HepG2 (cell line): ENCODE measurements at regions of chr6 and their contacts with region 1.

Region 1: GRCh38 chr6:50128420-50129005 is 78.8 kb upstream of the DEFB112 start:
- DNase-seq: peak; percentile 5
- ATAC-seq: no peak
- H3K4me3 ChIP-seq: no peak overlapping the region
- H3K27ac ChIP-seq: no peak overlapping the region
- H3K4me1 ChIP-seq: peaks cover 5% of the 10 kb centered on the region; the same call in 1 of the 2 replicates
- H3K27me3 ChIP-seq: no peaks in the 10 kb centered on the region
- CTCF ChIP-seq: peak; percentile 37
- EP300 ChIP-seq: no peak
- POLR2A ChIP-seq: no peak
- RAD21 ChIP-seq: no peak

Region 2: GRCh38 chr6:49866485-49866943 is 262.0 kb before region 1 on chr6 and contains the start of gene CRISP1:
- CTCF ChIA-PET with region 1: no interaction called
- POLR2A ChIA-PET with region 1: no interaction called
- in situ Hi-C with region 1: no loop called
- intact Hi-C with region 1: no loop called
- DNase-seq: no peak
- ATAC-seq: no peak
- H3K4me3 ChIP-seq: no peak within 1 kb of the TSS
- H3K27ac ChIP-seq: no peak within 1 kb of the TSS
- H3K4me1 ChIP-seq: no peaks in the 10 kb centered on the region
- H3K27me3 ChIP-seq: no peaks in the 10 kb centered on the region
- CTCF ChIP-seq: no peak
- EP300 ChIP-seq: no peak
- POLR2A ChIP-seq: no peak
- RAD21 ChIP-seq: no peak
- total RNA-seq, gene CRISP1: not detected in 2 replicates

Region 3: DNA sequence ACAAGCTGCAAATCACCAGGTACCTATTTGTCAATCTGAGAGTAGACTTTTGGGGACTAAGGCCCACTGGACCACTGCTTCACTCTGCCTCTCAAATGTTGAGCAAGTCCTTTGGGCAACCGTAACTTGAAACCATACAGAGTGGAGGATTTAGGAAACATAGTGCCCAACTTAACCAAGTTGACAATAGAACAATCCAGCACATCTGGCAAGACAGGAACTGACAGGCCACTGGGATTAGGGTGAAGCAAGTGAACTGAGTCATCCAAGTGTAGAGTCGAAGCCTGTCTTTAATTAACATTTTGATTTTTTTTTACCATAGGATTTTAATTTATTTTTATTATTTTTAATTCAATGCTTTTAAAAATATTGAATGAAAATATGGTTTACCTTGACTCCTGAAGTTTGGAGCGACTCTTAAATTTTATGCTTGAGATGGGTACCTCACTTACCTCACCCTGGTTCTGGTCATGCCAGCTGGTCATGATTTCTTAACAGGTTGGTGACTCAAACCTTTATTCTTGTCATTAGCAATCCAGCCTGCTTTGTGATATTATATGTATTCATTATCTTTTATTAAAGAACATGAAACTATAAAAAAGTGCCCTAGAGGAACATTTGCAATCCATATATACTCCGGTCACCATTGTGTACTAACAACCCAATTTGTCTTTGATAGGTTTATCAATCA is 233.3 kb after region 1 on chr6:
- CTCF ChIA-PET with region 1: no interaction called
- POLR2A ChIA-PET with region 1: no interaction called
- in situ Hi-C with region 1: no loop called
- intact Hi-C with region 1: no loop called
- DNase-seq: no peak
- ATAC-seq: no peak
- H3K4me3 ChIP-seq: no peak overlapping the region
- H3K27ac ChIP-seq: no peak overlapping the region
- H3K4me1 ChIP-seq: no peaks in the 10 kb centered on the region
- H3K27me3 ChIP-seq: no peaks in the 10 kb centered on the region
- CTCF ChIP-seq: no peak
- EP300 ChIP-seq: no peak
- POLR2A ChIP-seq: no peak
- RAD21 ChIP-seq: no peak

Region 4: DNA sequence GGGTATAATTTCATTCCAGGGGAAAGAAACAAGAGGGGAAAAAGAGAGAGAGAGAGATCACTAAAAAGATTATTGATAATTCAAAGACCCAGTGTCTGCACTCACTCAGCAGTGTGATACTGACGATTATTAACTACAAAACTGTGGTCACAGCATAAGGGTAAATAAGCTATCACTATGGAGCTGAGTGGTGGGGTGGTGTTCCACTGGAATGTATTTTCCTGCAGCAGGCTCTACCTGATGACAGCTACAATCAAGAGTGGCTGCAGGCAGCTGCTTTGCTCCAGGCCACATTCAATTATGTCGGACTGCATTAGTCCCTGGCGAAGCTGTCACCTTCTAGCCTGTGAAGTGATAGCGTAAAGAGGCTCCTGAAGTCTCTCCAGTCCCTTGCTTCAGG is 462.6 kb after region 1 on chr6:
- CTCF ChIA-PET with region 1: no interaction called
- POLR2A ChIA-PET with region 1: no interaction called
- in situ Hi-C with region 1: loop called (anchors 10 kb)
- intact Hi-C with region 1: no loop called
- DNase-seq: no peak
- ATAC-seq: no peak
- H3K4me3 ChIP-seq: no peak overlapping the region
- H3K27ac ChIP-seq: no peak overlapping the region
- H3K4me1 ChIP-seq: no peaks in the 10 kb centered on the region
- H3K27me3 ChIP-seq: no peaks in the 10 kb centered on the region
- CTCF ChIP-seq: no peak
- EP300 ChIP-seq: no peak
- POLR2A ChIP-seq: no peak
- RAD21 ChIP-seq: no peak

Region 5: DNA sequence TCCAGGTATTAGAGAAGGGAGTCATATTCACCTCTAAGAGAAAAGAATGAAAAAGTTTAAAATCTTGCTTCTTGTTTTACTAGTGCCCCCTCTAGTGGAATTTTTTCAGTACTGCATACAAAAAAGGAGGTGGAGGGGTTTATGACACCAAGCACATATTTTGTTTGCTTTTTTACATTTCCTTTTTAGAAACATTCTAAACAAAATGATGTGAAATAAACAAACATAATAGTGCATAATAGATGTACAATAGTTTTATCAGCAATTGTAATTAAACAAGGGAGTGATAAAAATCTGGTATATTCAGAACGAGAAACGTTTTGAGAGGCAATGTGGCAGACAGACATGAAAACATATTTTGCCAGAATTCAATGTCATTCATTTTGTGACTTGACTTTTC is 473.8 kb after region 1 on chr6:
- CTCF ChIA-PET with region 1: interaction called, 12 read pairs
- POLR2A ChIA-PET with region 1: no interaction called
- in situ Hi-C with region 1: loop called (anchors 10 kb)
- intact Hi-C with region 1: loop called (anchors 1 kb)
- DNase-seq: peak; percentile 41
- ATAC-seq: no peak; the same call in 2 of the 3 replicates
- H3K4me3 ChIP-seq: no peak overlapping the region
- H3K27ac ChIP-seq: no peak overlapping the region
- H3K4me1 ChIP-seq: no peaks in the 10 kb centered on the region
- H3K27me3 ChIP-seq: no peaks in the 10 kb centered on the region
- CTCF ChIP-seq: peak; percentile 64
- EP300 ChIP-seq: no peak
- POLR2A ChIP-seq: no peak
- RAD21 ChIP-seq: peak; percentile 29; the same call in 1 of the 2 replicates

Region 6: DNA sequence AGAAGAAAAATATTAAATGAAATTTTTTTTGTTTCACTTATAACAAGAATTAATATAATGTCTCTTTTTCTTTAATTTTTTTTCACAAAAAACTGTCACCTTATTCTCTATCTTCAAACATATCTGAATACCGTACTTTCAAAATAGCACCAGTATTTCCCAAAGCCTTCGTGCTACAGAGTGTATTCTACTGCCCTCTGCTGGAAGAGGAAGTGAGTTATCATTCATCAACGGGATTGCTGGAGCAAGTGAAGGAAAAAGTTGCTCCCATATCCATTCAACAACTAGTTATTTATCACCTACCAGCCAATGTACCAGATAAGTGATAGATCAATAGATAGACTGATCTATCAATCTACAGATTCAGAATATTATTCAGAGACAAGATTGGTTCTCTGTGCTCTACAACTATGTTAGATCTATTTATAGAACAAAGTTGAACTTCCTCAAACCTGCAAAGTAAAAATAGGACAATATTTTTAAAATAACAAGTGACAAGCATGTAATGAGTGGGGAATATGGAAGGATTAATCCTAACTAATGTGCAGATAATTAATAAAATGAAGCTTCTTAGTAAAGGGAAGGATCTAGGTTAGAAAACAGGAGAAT is 663.5 kb after region 1 on chr6:
- CTCF ChIA-PET with region 1: no interaction called
- POLR2A ChIA-PET with region 1: no interaction called
- in situ Hi-C with region 1: loop called (anchors 25 kb)
- intact Hi-C with region 1: loop called (anchors 2 kb)
- DNase-seq: peak; percentile 61
- ATAC-seq: peak; percentile 86
- H3K4me3 ChIP-seq: no peak overlapping the region
- H3K27ac ChIP-seq: no peak overlapping the region
- H3K4me1 ChIP-seq: no peaks in the 10 kb centered on the region
- H3K27me3 ChIP-seq: no peaks in the 10 kb centered on the region
- CTCF ChIP-seq: peak; percentile 82
- EP300 ChIP-seq: no peak
- POLR2A ChIP-seq: no peak
- RAD21 ChIP-seq: 0 out of 2 replicates have a peak, but pooled peaks have one; percentile 40